ENCODE measurements at regions of chr2 and their contacts with region 1.

Region 1: GRCh38 chr2:83516503-83516902 is 942.6 kb downstream of the SUCLG1 start:
- DNase-seq: peak in 1 of 2 experiments; percentile 61
- H3K4me3 ChIP-seq: no peak overlapping the region
- H3K27ac ChIP-seq: no peak overlapping the region
- H3K4me1 ChIP-seq: no peaks in the 10 kb centered on the region
- H3K27me3 ChIP-seq: no peaks in the 10 kb centered on the region
- CTCF ChIP-seq: peak; percentile 21 to 65 (median 46)
- EP300 ChIP-seq: no peak
- POLR2A ChIP-seq: no peak
- RAD21 ChIP-seq: peak; percentile 46 to 58; a peak in 3 of 4 replicates

Region 2: DNA sequence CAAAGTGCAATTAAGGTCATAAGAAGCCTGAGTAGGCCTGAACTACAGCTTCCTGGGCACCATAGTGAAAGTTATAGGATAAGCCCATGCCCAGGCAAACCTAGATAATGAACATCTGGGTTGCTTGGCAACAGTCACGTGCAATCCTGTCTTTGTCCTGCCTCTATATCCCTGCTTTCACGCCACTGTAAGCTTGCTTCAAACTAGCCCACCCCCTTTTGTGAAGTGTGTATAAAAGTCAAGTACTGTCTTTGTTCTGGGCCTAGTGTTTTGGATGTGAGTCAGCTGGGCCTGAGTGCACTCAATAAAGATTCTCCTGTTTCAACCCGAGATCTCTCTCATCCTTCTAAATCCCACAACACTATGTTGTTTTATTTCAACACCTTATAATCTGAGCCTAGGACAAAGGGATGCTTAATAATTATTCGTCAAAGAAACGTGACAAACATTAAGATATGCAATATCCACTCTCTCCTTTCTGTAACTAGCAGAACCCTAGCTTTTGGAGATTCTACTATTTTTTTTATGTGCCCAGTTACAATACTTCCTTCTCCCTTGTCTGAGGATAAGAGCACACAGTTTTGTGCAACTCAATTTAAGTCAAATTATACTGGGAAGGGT is 14.8 kb after region 1 on chr2:
- CTCF ChIA-PET with region 1: interaction called, 12 read pairs
- POLR2A ChIA-PET with region 1: no interaction called
- DNase-seq: no peak
- H3K4me3 ChIP-seq: no peak overlapping the region
- H3K27ac ChIP-seq: no peak overlapping the region
- H3K4me1 ChIP-seq: peaks cover 0 to 3% (median 0%) of the 10 kb centered on the region in 4 experiments; a peak in 2 of 7 replicates
- H3K27me3 ChIP-seq: peaks cover 0 to 2% (median 0%) of the 10 kb centered on the region in 4 experiments; a peak in 1 of 7 replicates
- CTCF ChIP-seq: no peak
- EP300 ChIP-seq: no peak
- POLR2A ChIP-seq: no peak
- RAD21 ChIP-seq: no peak

Region 3: GRCh38 chr2:83584672-83585071 is 68.2 kb after region 1 on chr2:
- CTCF ChIA-PET with region 1: no interaction called
- POLR2A ChIA-PET with region 1: no interaction called
- DNase-seq: peak in 1 of 2 experiments; percentile 17
- H3K4me3 ChIP-seq: peak overlapping the region in 1 of 4 experiments; percentile 10; a peak in 1 of 8 replicates
- H3K27ac ChIP-seq: no peak overlapping the region
- H3K4me1 ChIP-seq: peaks cover 0 to 9% (median 1%) of the 10 kb centered on the region in 4 experiments; a peak in 4 of 7 replicates
- H3K27me3 ChIP-seq: no peaks in the 10 kb centered on the region
- CTCF ChIP-seq: no peak
- EP300 ChIP-seq: no peak
- POLR2A ChIP-seq: no peak
- RAD21 ChIP-seq: no peak

Measured in H1 (cell line).